ENCODE measurements at regions of chr2 and their contacts with region 1.

Region 1: DNA sequence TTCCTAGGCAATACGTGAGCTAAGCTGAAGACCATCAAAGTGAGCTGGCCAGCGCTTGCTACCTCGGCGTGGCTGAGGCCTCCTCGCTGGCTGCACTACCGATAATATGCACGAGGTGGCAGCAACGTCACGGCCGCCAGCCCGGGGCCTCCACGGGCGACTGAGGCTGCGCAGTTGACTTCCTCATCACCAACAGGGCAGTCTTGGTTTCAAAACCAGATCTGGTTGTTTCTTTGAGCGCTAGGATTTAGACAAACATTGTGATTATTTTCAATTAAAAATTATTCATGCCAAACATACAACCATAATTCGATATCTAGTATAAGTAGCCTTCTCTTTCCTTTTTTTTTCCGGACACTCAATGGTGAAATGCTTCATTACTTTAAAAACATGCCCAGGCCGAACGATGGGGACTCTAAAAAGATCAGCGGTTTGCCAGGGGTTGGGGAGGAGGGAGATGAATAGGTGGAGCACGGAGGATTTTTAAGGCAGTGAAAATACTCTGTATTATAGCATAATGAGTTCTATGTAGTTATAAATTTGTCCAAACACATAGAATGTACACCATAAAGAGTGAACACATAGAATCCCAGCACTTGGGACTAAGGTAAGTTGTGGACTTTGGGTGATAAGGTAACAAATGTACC is 52.0 kb downstream of the CYBRD1 start:
- DNase-seq: peak; percentile 83
- H3K4me3 ChIP-seq: no peak overlapping the region
- H3K27ac ChIP-seq: no peak overlapping the region
- H3K4me1 ChIP-seq: no peaks in the 10 kb centered on the region
- H3K27me3 ChIP-seq: no peaks in the 10 kb centered on the region
- CTCF ChIP-seq: peak; percentile 97

Region 2: DNA sequence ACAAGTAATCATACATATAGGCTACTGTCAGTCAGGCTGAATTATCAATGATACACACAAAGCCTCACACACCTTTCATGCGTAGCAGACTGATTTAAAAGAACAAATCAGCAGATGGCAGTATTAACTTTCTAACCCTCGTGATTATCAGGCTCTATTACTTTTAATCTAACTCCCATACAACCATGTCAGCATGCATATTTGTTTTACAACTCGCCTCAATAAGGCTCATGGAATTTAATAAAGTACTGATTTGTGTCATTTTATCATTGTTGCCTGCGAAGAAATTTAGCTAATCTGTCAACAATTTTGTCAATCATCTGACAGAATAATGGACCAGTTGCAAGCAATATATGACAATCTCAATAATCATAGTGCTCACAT is 237.0 kb after region 1 on chr2:
- CTCF ChIA-PET with region 1: no interaction called
- POLR2A ChIA-PET with region 1: no interaction called
- intact Hi-C with region 1: loop called (anchors 10 kb)
- DNase-seq: peak; percentile 67
- H3K4me3 ChIP-seq: no peak overlapping the region
- H3K27ac ChIP-seq: no peak overlapping the region
- H3K4me1 ChIP-seq: peaks cover 18% of the 10 kb centered on the region
- H3K27me3 ChIP-seq: no peaks in the 10 kb centered on the region
- CTCF ChIP-seq: peak; percentile 64

Region 3: GRCh38 chr2:172113617-172114016 is 539.3 kb after region 1 on chr2:
- CTCF ChIA-PET with region 1: interaction called, 10 read pairs
- POLR2A ChIA-PET with region 1: no interaction called
- intact Hi-C with region 1: loop called (anchors 2 kb)
- DNase-seq: peak; percentile 79
- H3K4me3 ChIP-seq: no peak overlapping the region
- H3K27ac ChIP-seq: no peak overlapping the region
- H3K4me1 ChIP-seq: peaks cover 3% of the 10 kb centered on the region
- H3K27me3 ChIP-seq: no peaks in the 10 kb centered on the region
- CTCF ChIP-seq: peak; percentile 63

Region 4: GRCh38 chr2:172131713-172132555 is 557.7 kb after region 1 on chr2:
- CTCF ChIA-PET with region 1: interaction called, 3 read pairs
- POLR2A ChIA-PET with region 1: no interaction called
- intact Hi-C with region 1: loop called (anchors 1 kb)
- DNase-seq: no peak
- H3K4me3 ChIP-seq: no peak overlapping the region
- H3K27ac ChIP-seq: no peak overlapping the region
- H3K4me1 ChIP-seq: no peaks in the 10 kb centered on the region
- H3K27me3 ChIP-seq: no peaks in the 10 kb centered on the region
- CTCF ChIP-seq: no peak

Region 5: GRCh38 chr2:172427256-172427989 is 853.2 kb after region 1 on chr2 and contains the start of gene ITGA6:
- CTCF ChIA-PET with region 1: no interaction called
- POLR2A ChIA-PET with region 1: no interaction called
- intact Hi-C with region 1: no loop called
- DNase-seq: peak; percentile 56
- H3K4me3 ChIP-seq: peak within 1 kb of the TSS; percentile 66
- H3K27ac ChIP-seq: no peak within 1 kb of the TSS
- H3K4me1 ChIP-seq: peaks cover 17% of the 10 kb centered on the region
- H3K27me3 ChIP-seq: peaks cover 12% of the 10 kb centered on the region
- CTCF ChIP-seq: peak; percentile 19; the same call in 1 of the 2 replicates
- total RNA-seq, gene ITGA6: 7.7 and 10.7 TPM in 2 replicates